CD4-positive, alpha-beta T cell (primary cell): ENCODE measurements at regions of chr2 and their contacts with region 1.

Region 1: GRCh38 chr2:65300761-65301711 is 73.4 kb downstream of the ACTR2 start:
- DNase-seq: peak; percentile 40 to 80 (median 70)
- ATAC-seq: peak; percentile 93
- H3K4me3 ChIP-seq: peak overlapping the region; percentile 49
- H3K4me3 Mint-ChIP-seq: peak overlapping the region; percentile 85
- H3K27ac ChIP-seq: peak overlapping the region; percentile 21 to 52
- H3K27ac Mint-ChIP-seq: peak overlapping the region; percentile 90
- H3K4me1 ChIP-seq: peaks cover 27% of the 10 kb centered on the region
- H3K4me1 Mint-ChIP-seq: peaks cover 44% of the 10 kb centered on the region
- H3K27me3 ChIP-seq: no peaks in the 10 kb centered on the region
- H3K27me3 Mint-ChIP-seq: no peaks in the 10 kb centered on the region
- CTCF ChIP-seq: no peak

Region 2: DNA sequence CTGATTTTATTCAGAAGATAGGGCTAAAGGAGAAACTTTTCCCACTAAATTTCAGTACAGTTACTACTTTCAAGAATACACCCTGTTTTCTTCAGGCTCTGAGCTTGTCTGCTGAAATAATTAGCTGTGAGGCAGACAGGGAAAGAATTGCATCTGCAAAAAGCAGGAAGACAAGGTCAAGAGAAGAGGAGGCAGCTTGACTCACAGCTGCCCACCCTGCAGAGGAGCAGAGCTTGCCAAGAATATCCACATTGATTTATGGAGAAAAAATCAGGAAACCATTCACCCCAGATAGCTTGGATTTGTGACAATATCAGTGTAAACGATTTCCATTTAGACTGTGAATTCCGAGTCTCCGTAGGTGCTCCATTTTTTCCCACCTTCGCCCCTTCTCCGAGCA is 24.4 kb before region 1 on chr2:
- CTCF ChIA-PET with region 1: no interaction called
- POLR2A ChIA-PET with region 1: interaction called, 14 read pairs
- intact Hi-C with region 1: no loop called
- DNase-seq: no peak
- ATAC-seq: no peak
- H3K4me3 ChIP-seq: no peak overlapping the region
- H3K4me3 Mint-ChIP-seq: no peak overlapping the region
- H3K27ac ChIP-seq: no peak overlapping the region
- H3K27ac Mint-ChIP-seq: peak overlapping the region; percentile 45
- H3K4me1 ChIP-seq: peaks cover 13% of the 10 kb centered on the region
- H3K4me1 Mint-ChIP-seq: peaks cover 18% of the 10 kb centered on the region
- H3K27me3 ChIP-seq: no peaks in the 10 kb centered on the region
- H3K27me3 Mint-ChIP-seq: no peaks in the 10 kb centered on the region
- CTCF ChIP-seq: no peak

Region 3: GRCh38 chr2:65320042-65320725 is 19.1 kb after region 1 on chr2:
- CTCF ChIA-PET with region 1: no interaction called
- POLR2A ChIA-PET with region 1: no interaction called
- intact Hi-C with region 1: no loop called
- DNase-seq: peak in 2 of 14 experiments; percentile 6 to 27
- ATAC-seq: peak; percentile 44
- H3K4me3 ChIP-seq: no peak overlapping the region
- H3K4me3 Mint-ChIP-seq: no peak overlapping the region
- H3K27ac ChIP-seq: no peak overlapping the region
- H3K27ac Mint-ChIP-seq: no peak overlapping the region
- H3K4me1 ChIP-seq: peaks cover 6% of the 10 kb centered on the region
- H3K4me1 Mint-ChIP-seq: peaks cover 5% of the 10 kb centered on the region
- H3K27me3 ChIP-seq: no peaks in the 10 kb centered on the region
- H3K27me3 Mint-ChIP-seq: no peaks in the 10 kb centered on the region
- CTCF ChIP-seq: no peak

Region 4: DNA sequence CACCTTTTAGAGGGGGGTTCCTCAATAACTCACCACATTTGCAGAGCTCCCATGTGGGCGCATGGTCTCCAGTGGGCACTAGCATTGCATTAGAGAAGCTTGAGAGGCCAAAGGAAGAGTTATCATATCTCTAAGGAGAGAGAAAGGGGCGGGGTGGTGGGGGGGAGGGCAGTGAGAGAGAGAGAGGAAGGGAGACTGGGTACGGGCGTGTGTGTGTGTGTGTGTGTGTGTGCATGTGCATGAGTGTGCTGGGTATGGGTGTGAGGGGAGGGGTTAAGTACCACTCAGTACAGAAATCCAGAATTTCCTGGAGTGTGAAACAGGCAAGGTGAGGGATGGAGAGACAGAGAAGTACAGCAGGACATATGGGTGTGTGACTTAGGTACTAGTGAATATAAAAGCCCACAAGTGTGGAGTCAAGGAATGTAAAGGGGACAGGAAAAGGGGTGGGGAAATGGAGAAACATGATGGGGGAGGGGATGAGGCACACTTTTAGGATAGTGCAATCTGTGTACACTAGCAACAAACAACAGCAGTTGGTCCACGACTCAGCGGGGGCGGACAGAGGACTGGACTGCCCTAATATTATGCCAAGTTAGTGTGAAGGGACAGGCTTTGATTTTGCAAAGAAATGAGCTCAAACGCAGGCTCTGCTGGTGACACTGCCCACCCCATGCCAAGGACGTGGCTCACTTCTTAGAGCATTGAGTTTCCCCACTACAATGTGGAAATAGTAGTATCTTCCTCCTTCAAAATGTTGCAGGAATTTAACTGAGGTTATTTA is 40.1 kb after region 1 on chr2:
- CTCF ChIA-PET with region 1: no interaction called
- POLR2A ChIA-PET with region 1: no interaction called
- intact Hi-C with region 1: loop called in 1 of 2 experiments (anchors 5 kb)
- DNase-seq: no peak
- ATAC-seq: no peak
- H3K4me3 ChIP-seq: no peak overlapping the region
- H3K4me3 Mint-ChIP-seq: no peak overlapping the region
- H3K27ac ChIP-seq: no peak overlapping the region
- H3K27ac Mint-ChIP-seq: no peak overlapping the region
- H3K4me1 ChIP-seq: no peaks in the 10 kb centered on the region
- H3K4me1 Mint-ChIP-seq: no peaks in the 10 kb centered on the region
- H3K27me3 ChIP-seq: no peaks in the 10 kb centered on the region
- H3K27me3 Mint-ChIP-seq: no peaks in the 10 kb centered on the region
- CTCF ChIP-seq: no peak